SK-N-SH (cell line): ENCODE measurements at regions of chr11 and their contacts with region 1.

Region 1: DNA sequence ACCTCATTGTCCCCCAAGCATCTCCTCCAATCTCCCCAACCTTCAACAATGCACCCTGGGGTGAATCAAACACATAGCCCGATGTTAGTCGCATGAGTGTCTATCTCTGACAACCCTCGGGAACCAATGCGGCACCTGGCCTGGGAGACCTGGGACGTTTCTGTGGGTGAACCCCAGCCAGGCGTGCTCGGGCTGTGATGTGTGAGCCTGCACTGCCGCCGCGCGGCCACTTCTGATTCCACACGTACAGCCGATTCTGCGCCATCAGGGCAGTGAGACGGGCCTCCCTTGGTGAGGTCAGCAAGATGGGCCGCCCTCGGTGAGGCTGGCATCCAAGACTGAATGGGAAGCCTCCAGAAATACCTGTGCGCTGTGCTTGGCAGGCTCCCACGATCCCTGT is 5.2 kb upstream of the H19 start:
- DNase-seq: no peak
- H3K4me3 ChIP-seq: no peak overlapping the region
- H3K27ac ChIP-seq: no peak overlapping the region
- H3K4me1 ChIP-seq: no peaks in the 10 kb centered on the region
- H3K27me3 ChIP-seq: no peaks in the 10 kb centered on the region
- CTCF ChIP-seq: no peak
- EP300 ChIP-seq: no peak
- RAD21 ChIP-seq: no peak

Region 2: DNA sequence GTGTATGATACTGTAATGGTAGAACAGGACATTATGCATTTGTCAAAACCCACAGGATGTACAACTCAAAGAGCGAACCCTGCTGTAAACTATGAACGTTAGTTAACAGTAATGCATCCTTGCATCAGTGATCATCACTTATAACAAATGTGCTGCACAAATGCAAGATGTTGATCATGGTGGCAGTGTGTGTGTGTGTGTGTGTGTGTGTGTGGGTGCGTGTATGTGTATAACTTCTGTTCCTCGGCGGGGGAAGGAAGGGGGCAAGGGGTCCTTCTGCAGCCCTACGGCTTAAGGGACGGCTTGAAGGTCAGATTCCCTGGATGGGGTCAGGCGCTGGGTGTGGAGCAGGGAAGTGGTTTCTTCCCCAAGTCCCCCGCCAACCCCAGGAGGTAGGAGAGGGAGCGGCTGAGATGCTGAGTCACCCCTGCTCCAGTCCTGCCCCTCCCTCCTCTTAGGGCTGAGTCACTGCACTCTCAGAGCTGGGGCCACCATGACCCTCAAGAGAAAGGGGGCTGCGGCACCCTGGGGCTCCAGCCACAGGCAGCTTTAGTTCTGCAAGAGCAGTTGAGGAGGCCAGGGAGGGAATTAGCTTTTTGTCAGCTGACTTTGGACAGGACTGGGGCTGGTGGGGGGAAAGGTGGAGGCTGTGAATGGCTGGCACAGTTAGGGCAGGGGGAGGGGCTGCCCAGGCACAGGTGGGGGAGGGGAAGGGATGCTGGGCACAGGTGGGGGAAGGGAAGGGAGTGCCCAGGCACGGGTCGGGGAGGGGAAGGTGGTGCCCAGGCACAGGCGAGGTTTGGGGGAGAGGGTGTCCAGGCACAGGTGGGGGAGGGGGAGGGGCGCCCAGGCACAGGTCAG is 230.3 kb before region 1 on chr11:
- CTCF ChIA-PET with region 1: no interaction called
- POLR2A ChIA-PET with region 1: no interaction called
- DNase-seq: no peak
- H3K4me3 ChIP-seq: no peak overlapping the region
- H3K27ac ChIP-seq: peak overlapping the region; percentile 5 to 55; a peak in 3 of 4 replicates
- H3K4me1 ChIP-seq: peaks cover 4 to 12% of the 10 kb centered on the region in 2 experiments; a peak in 2 of 4 replicates
- H3K27me3 ChIP-seq: no peaks in the 10 kb centered on the region
- CTCF ChIP-seq: no peak
- EP300 ChIP-seq: peak in 1 of 2 experiments; percentile 56; a peak in 1 of 4 replicates
- RAD21 ChIP-seq: no peak

Region 3: DNA sequence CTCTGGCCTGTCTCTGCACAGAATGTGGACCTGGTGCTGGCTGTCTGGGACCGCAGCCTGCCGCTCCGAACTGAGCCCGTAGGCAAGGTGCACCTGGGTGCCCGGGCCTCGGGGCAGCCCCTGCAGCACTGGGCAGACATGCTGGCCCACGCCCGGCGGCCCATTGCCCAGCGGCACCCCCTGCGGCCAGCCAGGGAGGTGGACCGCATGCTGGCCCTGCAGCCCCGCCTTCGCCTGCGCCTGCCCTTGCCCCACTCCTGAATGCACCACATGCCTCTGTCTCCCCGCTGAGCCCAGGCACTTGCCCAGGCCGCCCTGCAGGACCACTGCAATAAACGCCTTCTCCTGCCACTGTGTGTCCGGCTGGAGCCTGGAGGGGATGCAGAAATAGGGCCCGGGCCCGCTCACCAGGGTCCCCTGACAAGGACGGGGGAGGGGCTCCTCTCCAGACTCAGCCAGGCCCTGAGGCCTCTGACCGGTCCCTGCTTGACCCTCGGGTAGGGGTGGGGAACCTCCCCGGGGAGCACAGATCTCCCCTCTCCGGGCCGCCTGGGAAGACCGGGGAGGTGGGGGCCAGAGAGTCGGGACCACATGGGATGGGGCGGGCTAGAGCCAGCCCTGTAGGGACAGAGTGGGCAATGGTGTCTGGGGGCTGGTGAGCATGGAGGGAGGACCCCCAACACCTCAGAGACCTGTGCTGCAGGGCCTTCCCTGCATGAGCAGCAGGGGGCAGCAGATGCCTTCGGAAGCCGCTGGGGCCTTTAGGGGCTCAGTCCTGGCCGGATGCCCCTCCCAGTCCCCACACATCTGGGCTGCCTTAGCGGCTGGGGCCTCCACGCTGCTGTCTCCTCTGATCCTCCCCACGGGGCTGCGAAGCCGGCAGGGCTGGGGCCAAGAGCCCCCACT is 165.4 kb before region 1 on chr11:
- CTCF ChIA-PET with region 1: interaction called, 148 read pairs
- POLR2A ChIA-PET with region 1: no interaction called
- DNase-seq: peak; percentile 97
- H3K4me3 ChIP-seq: no peak overlapping the region
- H3K27ac ChIP-seq: peak overlapping the region in 1 of 2 experiments; percentile 60; a peak in 1 of 4 replicates
- H3K4me1 ChIP-seq: peaks cover 0 to 39% of the 10 kb centered on the region in 2 experiments; a peak in 1 of 4 replicates
- H3K27me3 ChIP-seq: no peaks in the 10 kb centered on the region
- CTCF ChIP-seq: peak; percentile 80
- EP300 ChIP-seq: no peak
- RAD21 ChIP-seq: peak; percentile 93

Region 4: DNA sequence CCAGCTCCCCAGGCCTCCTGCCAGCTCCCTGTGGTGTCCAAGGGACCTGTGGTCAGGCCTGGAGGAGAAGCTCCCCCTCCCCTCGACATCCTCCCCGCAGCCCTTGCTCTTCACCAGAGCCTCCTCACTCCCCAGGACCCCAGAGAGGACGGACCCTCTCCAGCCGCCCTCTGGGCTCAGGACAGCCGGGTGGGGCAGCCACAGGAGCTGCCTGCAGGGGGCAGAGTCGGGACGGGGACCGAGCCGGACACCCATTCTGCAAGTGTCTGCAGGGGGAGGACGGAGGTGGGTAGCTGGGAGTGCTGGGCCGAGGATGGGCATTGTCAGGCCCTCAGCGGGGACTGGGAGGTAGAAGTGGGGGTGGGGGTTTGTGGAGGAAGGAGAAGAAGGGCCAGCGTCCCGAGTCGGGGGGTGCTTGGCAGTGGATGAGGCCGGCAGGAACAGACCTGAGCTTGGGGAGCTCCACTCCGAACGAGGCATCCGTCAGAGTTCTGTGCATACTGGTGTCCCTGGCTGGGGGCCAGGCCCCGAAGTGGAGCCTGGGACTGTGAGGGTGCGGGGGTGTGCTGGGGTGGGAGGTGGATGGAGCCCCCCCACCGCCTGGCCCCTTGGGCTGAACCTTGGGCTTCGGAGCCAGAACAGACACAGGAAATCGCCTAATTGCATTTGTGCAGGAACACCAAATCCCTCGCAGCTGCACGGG is 126.3 kb before region 1 on chr11:
- CTCF ChIA-PET with region 1: interaction called, 39 read pairs
- POLR2A ChIA-PET with region 1: interaction called, 20 read pairs
- DNase-seq: peak; percentile 86
- H3K4me3 ChIP-seq: no peak overlapping the region; a peak in 1 of 4 replicates
- H3K27ac ChIP-seq: peak overlapping the region; percentile 28 to 78; a peak in 2 of 4 replicates
- H3K4me1 ChIP-seq: peaks cover 0 to 46% of the 10 kb centered on the region in 2 experiments; a peak in 2 of 4 replicates
- H3K27me3 ChIP-seq: no peaks in the 10 kb centered on the region
- CTCF ChIP-seq: peak; percentile 51
- EP300 ChIP-seq: no peak; a peak in 1 of 4 replicates
- RAD21 ChIP-seq: no peak

Region 5: GRCh38 chr11:1946812-1947484 is 55.9 kb before region 1 on chr11 and contains the start of gene MRPL23:
- CTCF ChIA-PET with region 1: interaction called, 41 read pairs
- POLR2A ChIA-PET with region 1: interaction called, 12 read pairs
- DNase-seq: no peak
- H3K4me3 ChIP-seq: no peak within 1 kb of the TSS
- H3K27ac ChIP-seq: no peak within 1 kb of the TSS
- H3K4me1 ChIP-seq: peaks cover 0 to 15% of the 10 kb centered on the region in 2 experiments; a peak in 1 of 4 replicates
- H3K27me3 ChIP-seq: no peaks in the 10 kb centered on the region
- CTCF ChIP-seq: no peak
- EP300 ChIP-seq: no peak
- RAD21 ChIP-seq: no peak
- polyA plus RNA-seq, gene MRPL23: 226 and 264 TPM in 2 replicates

Region 6: GRCh38 chr11:1983601-1983961 is 19.2 kb before region 1 on chr11:
- CTCF ChIA-PET with region 1: interaction called, 5 read pairs
- POLR2A ChIA-PET with region 1: interaction called, 18 read pairs
- DNase-seq: no peak
- H3K4me3 ChIP-seq: no peak overlapping the region
- H3K27ac ChIP-seq: no peak overlapping the region; a peak in 1 of 4 replicates
- H3K4me1 ChIP-seq: no peaks in the 10 kb centered on the region
- H3K27me3 ChIP-seq: no peaks in the 10 kb centered on the region
- CTCF ChIP-seq: no peak
- EP300 ChIP-seq: no peak
- RAD21 ChIP-seq: no peak